MCF 10A (cell line): ENCODE measurements at regions of chr1 and their contacts with region 1.

Region 1: DNA sequence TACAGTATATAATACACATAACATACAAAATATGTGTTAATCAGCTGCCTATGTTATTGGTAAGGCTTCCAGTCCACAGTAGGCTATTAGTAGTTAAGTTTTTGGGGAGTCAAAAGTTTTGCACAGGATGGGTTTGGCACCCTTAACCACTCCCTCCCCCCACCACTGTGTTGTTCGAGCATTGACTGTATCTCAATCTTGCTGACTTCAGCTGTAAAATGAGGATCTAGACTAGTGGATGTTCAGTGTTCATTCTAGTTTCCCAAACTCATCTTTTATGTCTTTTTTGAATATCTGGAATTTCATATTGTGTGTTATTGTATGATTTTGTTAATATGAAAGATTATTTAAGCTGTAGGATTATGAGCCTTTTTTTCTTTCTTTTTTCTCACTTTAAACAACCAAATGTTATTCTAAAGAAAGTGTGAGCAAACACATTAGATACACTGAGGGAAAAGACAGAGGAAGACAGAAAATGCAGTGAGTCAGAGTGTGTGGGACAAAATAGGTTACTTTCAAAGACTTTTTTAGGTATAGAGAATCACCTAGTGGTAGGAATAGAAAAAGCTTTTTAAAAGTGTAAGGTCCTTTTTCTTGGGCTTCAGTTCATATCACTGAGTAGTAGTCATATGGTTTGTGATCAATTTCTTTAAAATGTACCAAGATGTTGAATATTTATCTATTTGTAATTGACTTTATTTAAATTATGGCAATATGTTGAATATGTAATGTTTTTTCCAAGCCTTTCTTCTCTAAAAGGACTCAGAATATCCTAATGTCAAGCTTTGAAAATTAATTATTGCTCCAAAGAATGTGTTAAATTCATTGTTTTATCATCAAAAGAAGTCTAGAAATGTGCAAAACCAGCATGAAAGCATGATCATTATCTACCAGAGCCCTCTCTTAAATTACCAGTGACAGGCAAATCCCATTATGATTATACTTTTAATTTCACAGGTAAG is 17.9 kb upstream of the CENPF start:
- DNase-seq: peak; percentile 85
- H3K4me3 Mint-ChIP-seq: no peak overlapping the region
- H3K27ac Mint-ChIP-seq: peak overlapping the region; percentile 49
- H3K4me1 Mint-ChIP-seq: peaks cover 38% of the 10 kb centered on the region
- H3K27me3 Mint-ChIP-seq: no peaks in the 10 kb centered on the region
- CTCF ChIP-seq: peak; percentile 98

Region 2: DNA sequence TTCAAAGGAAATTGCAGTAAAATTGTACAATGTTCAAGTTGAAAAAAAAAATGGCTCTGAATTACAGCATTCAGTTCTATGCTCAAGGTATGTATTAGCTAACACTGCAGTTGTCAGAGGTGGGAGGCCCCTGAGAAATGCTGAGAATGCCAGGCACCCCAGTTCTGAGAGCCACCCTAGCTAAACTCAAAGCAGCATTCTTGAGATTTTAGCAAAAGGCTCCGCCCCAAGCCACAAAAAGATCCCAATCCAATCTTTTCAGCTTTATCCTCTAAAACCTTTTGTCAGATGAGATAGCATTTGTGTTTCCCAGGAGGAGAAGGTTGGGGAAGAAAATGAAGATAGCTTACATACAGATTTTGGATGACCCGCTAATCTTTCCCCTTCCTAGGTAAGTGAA is 235.3 kb before region 1 on chr1:
- CTCF ChIA-PET with region 1: interaction called, 25 read pairs
- POLR2A ChIA-PET with region 1: interaction called, 3 read pairs
- intact Hi-C with region 1: no loop called
- DNase-seq: no peak
- H3K4me3 Mint-ChIP-seq: no peak overlapping the region
- H3K27ac Mint-ChIP-seq: peak overlapping the region; percentile 23
- H3K4me1 Mint-ChIP-seq: no peaks in the 10 kb centered on the region
- H3K27me3 Mint-ChIP-seq: no peaks in the 10 kb centered on the region
- CTCF ChIP-seq: no peak

Region 3: GRCh38 chr1:214397497-214397896 is 187.6 kb before region 1 on chr1:
- CTCF ChIA-PET with region 1: interaction called, 44 read pairs
- POLR2A ChIA-PET with region 1: interaction called, 6 read pairs
- intact Hi-C with region 1: no loop called
- DNase-seq: no peak
- H3K4me3 Mint-ChIP-seq: no peak overlapping the region
- H3K27ac Mint-ChIP-seq: peak overlapping the region; percentile 55
- H3K4me1 Mint-ChIP-seq: peaks cover 15% of the 10 kb centered on the region
- H3K27me3 Mint-ChIP-seq: no peaks in the 10 kb centered on the region
- CTCF ChIP-seq: no peak

Region 4: DNA sequence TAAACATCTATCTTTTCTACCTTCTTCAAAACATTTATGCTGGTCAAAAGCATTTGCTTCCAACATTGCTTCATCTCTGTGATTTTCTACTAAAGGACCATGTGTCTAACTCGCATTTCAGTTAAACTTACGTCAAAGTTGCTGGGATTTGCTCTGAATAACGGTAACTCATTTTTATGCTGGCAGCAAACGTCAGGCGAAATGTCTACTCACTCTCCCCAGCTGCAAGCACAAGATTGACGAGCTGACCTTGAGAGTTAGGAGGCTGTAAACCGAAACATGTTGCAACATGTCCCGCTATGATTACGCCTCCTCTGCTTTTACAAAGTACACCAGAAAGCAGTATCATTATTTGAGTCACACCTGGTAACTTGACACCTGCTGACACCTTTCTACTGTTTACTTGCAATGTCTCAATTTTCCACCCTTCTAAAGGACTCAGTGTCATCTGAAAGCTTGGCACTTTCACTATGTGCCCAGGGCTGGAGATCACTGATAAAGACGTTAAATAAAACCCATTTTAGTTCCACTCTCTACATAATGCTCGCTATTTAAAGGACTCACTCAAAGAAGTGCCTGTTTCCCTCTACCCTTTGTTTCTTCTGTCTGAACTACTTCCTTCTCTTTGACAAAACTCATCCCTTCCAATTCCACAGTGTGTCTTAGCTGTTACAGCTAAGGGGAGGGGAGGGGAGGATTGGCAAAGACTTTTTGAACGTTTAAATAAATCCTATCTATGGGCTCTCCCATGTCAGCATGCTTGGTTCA is 145.6 kb before region 1 on chr1:
- CTCF ChIA-PET with region 1: interaction called, 50 read pairs
- POLR2A ChIA-PET with region 1: interaction called, 86 read pairs
- intact Hi-C with region 1: no loop called
- DNase-seq: peak; percentile 100
- H3K4me3 Mint-ChIP-seq: peak overlapping the region; percentile 65
- H3K27ac Mint-ChIP-seq: peak overlapping the region; percentile 99
- H3K4me1 Mint-ChIP-seq: peaks cover 61% of the 10 kb centered on the region
- H3K27me3 Mint-ChIP-seq: no peaks in the 10 kb centered on the region
- CTCF ChIP-seq: no peak

Region 5: GRCh38 chr1:214537219-214537618 is 47.9 kb before region 1 on chr1:
- CTCF ChIA-PET with region 1: interaction called, 8 read pairs
- POLR2A ChIA-PET with region 1: interaction called, 48 read pairs
- intact Hi-C with region 1: no loop called
- DNase-seq: peak; percentile 61
- H3K4me3 Mint-ChIP-seq: no peak overlapping the region
- H3K27ac Mint-ChIP-seq: no peak overlapping the region
- H3K4me1 Mint-ChIP-seq: peaks cover 47% of the 10 kb centered on the region
- H3K27me3 Mint-ChIP-seq: no peaks in the 10 kb centered on the region
- CTCF ChIP-seq: no peak

Region 6: DNA sequence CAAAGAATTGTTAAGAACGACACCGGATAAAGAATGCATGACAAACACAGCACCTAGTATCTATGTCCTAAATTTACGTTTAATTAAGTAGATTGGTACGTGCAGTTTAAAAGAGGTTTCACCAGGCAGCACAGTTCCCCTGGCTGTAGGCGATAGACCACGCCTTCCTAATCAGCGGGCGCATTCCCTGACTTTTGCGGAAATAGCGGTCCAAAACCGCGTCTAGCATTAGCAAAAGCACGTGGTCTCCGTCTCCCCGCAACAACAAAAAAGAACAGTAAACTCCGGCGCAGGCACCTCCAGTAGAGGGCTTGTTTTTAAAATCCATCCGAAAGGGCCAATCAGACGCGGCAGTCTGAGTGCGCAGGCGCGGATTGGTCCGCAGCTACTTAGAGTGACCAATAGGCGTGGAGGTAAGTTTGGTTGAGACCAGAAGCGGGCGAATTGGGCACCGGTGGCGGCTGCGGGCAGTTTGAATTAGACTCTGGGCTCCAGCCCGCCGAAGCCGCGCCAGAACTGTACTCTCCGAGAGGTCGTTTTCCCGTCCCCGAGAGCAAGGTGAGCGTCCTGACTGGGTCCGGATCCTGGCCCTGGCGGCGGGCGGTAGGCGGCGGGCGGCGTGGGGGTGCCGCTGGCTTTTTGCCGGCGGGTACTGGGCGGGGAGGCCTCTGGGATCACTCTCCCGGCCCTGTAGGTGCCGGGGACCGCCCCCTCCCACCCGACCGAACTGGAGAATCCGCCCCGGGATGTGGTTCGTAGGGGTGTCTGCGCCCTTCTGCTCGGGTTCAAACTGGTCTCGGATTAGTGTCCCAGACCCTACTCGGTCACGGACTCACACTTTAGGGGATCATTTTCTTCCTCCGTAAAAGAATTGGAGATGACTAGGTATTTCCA is 17.9 kb after region 1 on chr1 and contains the start of gene CENPF:
- CTCF ChIA-PET with region 1: interaction called, 34 read pairs
- POLR2A ChIA-PET with region 1: interaction called, 35 read pairs
- intact Hi-C with region 1: no loop called
- DNase-seq: peak; percentile 100
- H3K4me3 Mint-ChIP-seq: peak within 1 kb of the TSS; percentile 96
- H3K27ac Mint-ChIP-seq: peak within 1 kb of the TSS; percentile 94
- H3K4me1 Mint-ChIP-seq: peaks cover 16% of the 10 kb centered on the region
- H3K27me3 Mint-ChIP-seq: no peaks in the 10 kb centered on the region
- CTCF ChIP-seq: peak; percentile 28
- total RNA-seq, gene CENPF: 88.8 and 135 TPM in 2 replicates

Region 7: DNA sequence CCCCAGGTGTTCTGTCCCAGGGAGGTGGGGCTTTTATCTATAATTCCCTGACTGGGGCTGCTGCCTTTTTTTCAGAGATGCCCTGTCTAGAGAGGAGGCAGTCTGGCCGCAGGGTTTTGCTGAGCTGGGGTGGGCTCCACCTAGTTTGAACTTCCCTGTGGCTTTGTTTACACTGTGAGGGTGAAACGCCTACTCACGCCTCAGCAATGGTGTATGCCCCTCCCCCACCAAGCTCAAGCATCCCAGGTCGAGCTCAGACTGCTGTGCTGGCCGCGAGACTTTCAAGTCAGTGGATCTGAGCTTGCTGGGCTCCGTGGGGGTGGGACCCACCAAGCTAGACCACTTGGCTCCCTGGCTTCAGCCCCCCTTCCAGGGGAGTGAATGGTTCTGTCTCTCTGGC is 142.2 kb after region 1 on chr1:
- CTCF ChIA-PET with region 1: no interaction called
- POLR2A ChIA-PET with region 1: no interaction called
- intact Hi-C with region 1: no loop called
- DNase-seq: no peak
- H3K4me3 Mint-ChIP-seq: no peak overlapping the region
- H3K27ac Mint-ChIP-seq: no peak overlapping the region
- H3K4me1 Mint-ChIP-seq: no peaks in the 10 kb centered on the region
- H3K27me3 Mint-ChIP-seq: peaks cover 62% of the 10 kb centered on the region
- CTCF ChIP-seq: no peak